ENCODE measurements at regions of chr7 and their contacts with region 1.

Region 1: GRCh38 chr7:100137851-100138760 is 10.6 kb upstream of the LAMTOR4 start:
- DNase-seq: no peak
- H3K4me3 Mint-ChIP-seq: no peak overlapping the region
- H3K27ac Mint-ChIP-seq: peak overlapping the region; percentile 68
- H3K4me1 Mint-ChIP-seq: peaks cover 19% of the 10 kb centered on the region
- H3K27me3 Mint-ChIP-seq: peaks cover 16% of the 10 kb centered on the region

Region 2: GRCh38 chr7:100075418-100075817 is 62.7 kb before region 1 on chr7:
- CTCF ChIA-PET with region 1: no interaction called
- DNase-seq: no peak
- H3K4me3 Mint-ChIP-seq: no peak overlapping the region
- H3K27ac Mint-ChIP-seq: no peak overlapping the region
- H3K4me1 Mint-ChIP-seq: peaks cover 13% of the 10 kb centered on the region
- H3K27me3 Mint-ChIP-seq: no peaks in the 10 kb centered on the region

Region 3: GRCh38 chr7:100148559-100149350 is 10.6 kb after region 1 on chr7 and contains the start of gene LAMTOR4:
- CTCF ChIA-PET with region 1: interaction called, 13 read pairs
- DNase-seq: peak; percentile 99
- H3K4me3 Mint-ChIP-seq: peak within 1 kb of the TSS; percentile 96
- H3K27ac Mint-ChIP-seq: peak within 1 kb of the TSS; percentile 90
- H3K4me1 Mint-ChIP-seq: peaks cover 48% of the 10 kb centered on the region
- H3K27me3 Mint-ChIP-seq: no peaks in the 10 kb centered on the region

Measured in activated naive CD4-positive, alpha-beta T cell treated with anti-CD3 and anti-CD28 coated beads, Interleukin-2, amount 10 ng/mL, durations not matched to agents 7 days and 5 days (primary cell).